CD14-positive monocyte (primary cell): ENCODE measurements at regions of chr1 and their contacts with region 1.

Region 1: DNA sequence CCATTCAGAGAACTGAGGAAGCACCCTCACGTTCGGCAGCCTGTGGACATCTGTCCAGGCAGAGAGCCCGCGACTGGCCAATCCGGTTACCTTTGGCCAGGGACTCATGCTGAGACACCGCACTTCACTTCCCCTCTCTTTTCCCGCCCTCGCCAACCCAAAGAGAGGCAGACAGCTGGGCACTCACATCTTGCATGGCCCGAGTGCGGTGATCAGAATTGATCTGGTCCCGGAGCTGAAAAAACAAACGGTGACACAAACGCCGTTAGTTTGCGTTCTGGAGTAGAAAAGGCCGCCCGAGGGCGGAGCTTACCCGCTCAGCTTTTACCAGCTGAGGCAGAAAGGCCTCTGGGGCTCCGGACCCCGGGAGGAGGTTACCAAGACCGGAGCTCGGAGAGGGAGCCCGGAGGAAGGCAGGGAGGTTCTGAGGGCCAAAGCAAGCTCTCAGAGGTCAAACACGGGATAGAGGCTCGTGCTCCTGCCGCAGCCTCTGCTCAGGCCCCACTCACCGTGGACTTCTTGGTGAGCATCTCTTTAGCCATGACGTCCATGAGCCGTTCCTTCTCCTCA is 376 bp downstream of the SF3A3 start:
- DNase-seq: peak; percentile 57 to 85 (median 76)
- H3K4me3 ChIP-seq: peak overlapping the region; percentile 48 to 91 (median 84)
- H3K4me3 Mint-ChIP-seq: peak overlapping the region; percentile 94 to 99
- H3K27ac ChIP-seq: peak overlapping the region; percentile 63 to 83
- H3K27ac Mint-ChIP-seq: peak overlapping the region; percentile 86 to 96 (median 93)
- H3K4me1 ChIP-seq: peaks cover 16 to 23% of the 10 kb centered on the region in 2 donors
- H3K4me1 Mint-ChIP-seq: peaks cover 20% of the 10 kb centered on the region
- H3K27me3 ChIP-seq: no peaks in the 10 kb centered on the region
- H3K27me3 Mint-ChIP-seq: peaks cover 0 to 3% (median 1%) of the 10 kb centered on the region in 3 donors
- CTCF ChIP-seq: no peak

Region 2: GRCh38 chr1:38012363-38013226 is 23.1 kb after region 1 on chr1 and contains the start of gene UTP11:
- intact Hi-C with region 1: loop called in 1 of 2 experiments (anchors 2 kb)
- DNase-seq: peak; percentile 96 to 100 (median 99)
- H3K4me3 ChIP-seq: peak within 1 kb of the TSS; percentile 81 to 84 (median 83)
- H3K4me3 Mint-ChIP-seq: peak within 1 kb of the TSS; percentile 97 to 99
- H3K27ac ChIP-seq: peak within 1 kb of the TSS; percentile 86 to 92
- H3K27ac Mint-ChIP-seq: peak within 1 kb of the TSS; percentile 96 to 99 (median 97)
- H3K4me1 ChIP-seq: peaks cover 38 to 46% of the 10 kb centered on the region in 2 donors
- H3K4me1 Mint-ChIP-seq: peaks cover 36% of the 10 kb centered on the region
- H3K27me3 ChIP-seq: no peaks in the 10 kb centered on the region
- H3K27me3 Mint-ChIP-seq: peaks cover 0 to 2% (median 0%) of the 10 kb centered on the region in 3 donors
- CTCF ChIP-seq: no peak
- polyA plus RNA-seq, gene UTP11: 10.9 to 26.0 (median 20.5) TPM